ENCODE measurements at regions of chr10 and their contacts with region 1.

Region 1: GRCh38 chr10:95246579-95247051 is 44.2 kb downstream of the PDLIM1 start:
- DNase-seq: peak; percentile 80
- H3K4me3 Mint-ChIP-seq: no peak overlapping the region
- H3K27ac Mint-ChIP-seq: no peak overlapping the region
- H3K4me1 Mint-ChIP-seq: peaks cover 20% of the 10 kb centered on the region
- H3K27me3 Mint-ChIP-seq: peaks cover 11% of the 10 kb centered on the region

Region 2: DNA sequence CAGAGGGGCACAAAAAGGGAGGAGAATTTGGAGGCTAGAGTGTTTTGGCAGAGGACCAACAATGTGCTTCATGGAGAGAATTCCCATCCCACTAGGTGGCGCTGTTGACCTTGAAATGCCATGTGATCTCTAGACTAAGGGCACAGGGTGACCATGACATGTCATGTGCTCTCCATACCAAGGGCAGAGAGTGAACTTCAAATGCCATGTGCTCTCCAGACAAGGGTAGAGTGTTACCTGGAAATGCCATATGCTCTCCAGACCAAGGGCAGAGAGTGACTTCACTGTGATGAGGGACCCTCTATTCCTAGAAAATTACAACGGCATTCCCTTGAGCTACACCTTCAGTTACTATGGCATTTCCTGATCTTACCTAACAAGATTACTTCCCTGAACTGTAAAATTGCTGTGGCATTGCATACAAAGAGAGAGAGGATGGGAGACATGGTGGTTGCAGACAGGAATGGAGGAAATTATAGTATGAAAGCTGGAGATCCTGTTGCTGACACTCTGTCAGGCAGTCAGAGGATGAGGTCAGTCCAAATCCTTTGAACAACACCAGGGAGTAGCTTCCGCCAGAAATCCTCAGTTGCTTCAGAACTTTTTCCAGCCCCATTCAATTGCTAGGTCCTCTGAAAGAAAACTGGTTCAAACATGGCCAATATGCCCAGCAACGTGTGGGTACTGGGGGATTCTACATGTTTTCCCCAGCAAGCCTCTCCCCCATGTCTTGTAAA is 113.4 kb before region 1 on chr10:
- CTCF ChIA-PET with region 1: interaction called, 78 read pairs
- DNase-seq: peak; percentile 86
- H3K4me3 Mint-ChIP-seq: no peak overlapping the region
- H3K27ac Mint-ChIP-seq: no peak overlapping the region
- H3K4me1 Mint-ChIP-seq: no peaks in the 10 kb centered on the region
- H3K27me3 Mint-ChIP-seq: no peaks in the 10 kb centered on the region

Region 3: GRCh38 chr10:95183271-95184230 is 63.1 kb before region 1 on chr10:
- CTCF ChIA-PET with region 1: interaction called, 64 read pairs
- DNase-seq: peak; percentile 79
- H3K4me3 Mint-ChIP-seq: peak overlapping the region; percentile 62
- H3K27ac Mint-ChIP-seq: peak overlapping the region; percentile 20
- H3K4me1 Mint-ChIP-seq: peaks cover 7% of the 10 kb centered on the region
- H3K27me3 Mint-ChIP-seq: peaks cover 35% of the 10 kb centered on the region

Region 4: GRCh38 chr10:95201736-95202135 is 44.9 kb before region 1 on chr10:
- CTCF ChIA-PET with region 1: interaction called, 13 read pairs
- DNase-seq: no peak
- H3K4me3 Mint-ChIP-seq: no peak overlapping the region
- H3K27ac Mint-ChIP-seq: no peak overlapping the region
- H3K4me1 Mint-ChIP-seq: no peaks in the 10 kb centered on the region
- H3K27me3 Mint-ChIP-seq: peaks cover 6% of the 10 kb centered on the region

Region 5: DNA sequence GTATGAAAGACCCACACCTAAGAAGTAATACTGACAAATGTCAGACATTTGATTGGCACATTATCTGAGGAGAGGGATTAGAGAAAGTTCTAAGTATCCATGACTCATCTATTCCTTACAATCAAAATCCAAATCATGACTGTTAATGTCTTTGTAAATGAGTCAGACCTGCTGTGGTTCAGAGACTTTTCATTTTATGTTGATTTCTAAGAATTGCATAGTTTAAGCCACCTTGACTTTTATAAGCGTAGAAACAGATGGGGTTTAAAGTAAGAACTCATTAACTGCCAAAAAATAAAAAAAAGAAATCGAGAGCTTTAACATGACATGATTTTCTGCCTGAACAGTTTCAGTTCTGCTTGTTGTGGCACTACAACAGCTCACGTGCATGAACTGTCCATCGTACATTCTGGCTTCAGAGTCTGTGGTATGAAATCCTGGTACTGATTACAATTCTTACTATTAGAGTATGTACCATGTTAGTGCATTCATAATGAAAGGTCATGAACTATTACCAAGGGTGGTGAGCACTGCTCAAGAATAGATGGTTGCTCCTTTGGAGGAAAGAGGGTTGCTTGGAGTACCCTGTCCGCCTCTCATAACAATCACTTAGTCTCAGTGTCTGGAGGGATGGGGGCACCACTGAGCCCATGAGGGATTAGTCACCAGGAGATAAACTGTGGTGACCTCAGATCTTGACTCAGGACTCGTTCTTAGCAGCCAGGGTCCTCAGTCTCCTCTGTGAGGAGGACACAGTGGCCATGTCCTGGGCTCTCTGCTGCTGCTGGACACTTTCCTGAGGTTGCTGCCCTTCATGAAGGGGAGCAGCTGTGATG is 10.3 kb before region 1 on chr10:
- CTCF ChIA-PET with region 1: interaction called, 18 read pairs
- DNase-seq: no peak
- H3K4me3 Mint-ChIP-seq: no peak overlapping the region
- H3K27ac Mint-ChIP-seq: peak overlapping the region; percentile 72
- H3K4me1 Mint-ChIP-seq: peaks cover 24% of the 10 kb centered on the region
- H3K27me3 Mint-ChIP-seq: no peaks in the 10 kb centered on the region

Region 6: DNA sequence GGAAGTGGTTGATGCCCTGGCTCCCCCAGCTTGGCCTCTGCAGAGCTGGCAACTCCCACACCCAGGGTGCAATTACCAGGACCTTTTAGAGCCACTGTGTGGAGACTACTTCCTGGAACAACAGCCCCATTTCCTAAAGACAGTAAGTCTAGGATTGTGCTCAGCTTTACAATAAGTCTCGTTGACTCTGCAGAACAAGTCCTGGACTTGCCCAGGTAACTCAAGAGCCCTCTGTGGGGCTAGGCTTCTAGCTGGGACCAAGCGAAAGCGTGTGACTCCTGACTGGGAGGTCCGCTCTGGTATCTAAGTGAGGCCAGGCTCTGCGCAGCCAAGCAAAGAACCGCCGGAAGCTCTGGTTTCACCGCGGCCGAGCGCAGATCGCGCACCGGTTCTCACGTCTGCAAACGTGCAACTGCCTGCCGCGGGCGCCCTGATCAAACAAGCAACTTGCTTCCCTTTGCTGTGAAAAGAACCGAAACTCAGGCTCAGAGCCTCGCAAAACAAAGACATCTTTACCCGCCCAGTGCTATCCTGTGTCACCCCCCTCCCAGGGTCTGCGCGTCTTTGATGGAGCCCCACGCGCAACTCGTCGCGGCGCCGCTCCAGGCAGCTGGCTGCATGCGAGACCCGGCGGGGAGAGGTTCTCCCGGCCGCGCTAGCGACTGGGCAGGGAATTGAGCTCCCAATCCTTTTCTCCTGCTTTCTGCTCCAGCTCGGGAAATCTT is 48.6 kb after region 1 on chr10:
- CTCF ChIA-PET with region 1: interaction called, 28 read pairs
- DNase-seq: peak; percentile 85
- H3K4me3 Mint-ChIP-seq: peak overlapping the region; percentile 60
- H3K27ac Mint-ChIP-seq: peak overlapping the region; percentile 93
- H3K4me1 Mint-ChIP-seq: peaks cover 53% of the 10 kb centered on the region
- H3K27me3 Mint-ChIP-seq: peaks cover 48% of the 10 kb centered on the region

Region 7: GRCh38 chr10:95363303-95363912 is 116.8 kb after region 1 on chr10:
- CTCF ChIA-PET with region 1: interaction called, 320 read pairs
- DNase-seq: peak; percentile 68
- H3K4me3 Mint-ChIP-seq: no peak overlapping the region
- H3K27ac Mint-ChIP-seq: no peak overlapping the region
- H3K4me1 Mint-ChIP-seq: no peaks in the 10 kb centered on the region
- H3K27me3 Mint-ChIP-seq: peaks cover 20% of the 10 kb centered on the region

Region 8: GRCh38 chr10:95544783-95545500 is 298.3 kb after region 1 on chr10:
- CTCF ChIA-PET with region 1: no interaction called
- DNase-seq: no peak
- H3K4me3 Mint-ChIP-seq: no peak overlapping the region
- H3K27ac Mint-ChIP-seq: no peak overlapping the region
- H3K4me1 Mint-ChIP-seq: no peaks in the 10 kb centered on the region
- H3K27me3 Mint-ChIP-seq: peaks cover 17% of the 10 kb centered on the region